CD8-positive, alpha-beta T cell (primary cell): ENCODE measurements at regions of chr3 and their contacts with region 1.

Region 1: DNA sequence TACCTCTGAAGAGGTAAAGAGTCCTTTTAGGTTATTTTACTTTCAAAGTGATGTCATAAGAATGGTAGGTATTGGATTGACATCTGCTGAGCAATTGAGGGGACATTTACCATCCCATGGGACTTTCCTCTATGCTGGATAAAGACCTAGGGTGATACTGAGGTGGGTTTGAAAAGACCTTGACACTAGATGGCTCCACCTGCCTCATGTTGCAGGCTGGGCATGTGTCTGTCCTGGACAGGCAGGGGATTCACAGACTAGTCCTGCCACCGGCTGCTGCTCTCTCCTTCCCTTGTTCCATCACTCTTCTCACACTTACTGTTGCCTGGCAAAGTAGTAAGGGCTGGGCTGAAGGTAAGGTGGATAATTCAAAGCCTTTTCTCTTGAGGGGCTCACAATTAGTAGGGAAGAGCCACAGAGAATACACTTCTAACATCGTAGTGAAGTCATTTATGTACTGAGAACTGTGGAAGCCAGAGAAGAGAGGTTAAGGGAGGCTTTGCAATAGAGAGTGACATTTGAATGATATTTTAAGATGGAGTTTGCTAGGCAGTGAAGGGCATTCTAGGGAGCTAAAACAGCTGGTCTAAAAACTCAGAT is 27.7 kb downstream of the TRAK1 start:
- DNase-seq: peak in 2 of 9 experiments; percentile 31 to 49
- ATAC-seq: no peak
- H3K4me3 ChIP-seq: no peak overlapping the region
- H3K4me3 Mint-ChIP-seq: no peak overlapping the region
- H3K27ac ChIP-seq: no peak overlapping the region
- H3K27ac Mint-ChIP-seq: no peak overlapping the region
- H3K4me1 ChIP-seq: no peaks in the 10 kb centered on the region
- H3K4me1 Mint-ChIP-seq: peaks cover 18% of the 10 kb centered on the region
- H3K27me3 ChIP-seq: no peaks in the 10 kb centered on the region
- H3K27me3 Mint-ChIP-seq: no peaks in the 10 kb centered on the region
- CTCF ChIP-seq: no peak

Region 2: GRCh38 chr3:41690766-41691563 is 427.9 kb before region 1 on chr3:
- CTCF ChIA-PET with region 1: no interaction called
- POLR2A ChIA-PET with region 1: no interaction called
- intact Hi-C with region 1: no loop called
- DNase-seq: peak in 1 of 9 experiments; percentile 1
- ATAC-seq: no peak
- H3K4me3 ChIP-seq: no peak overlapping the region
- H3K4me3 Mint-ChIP-seq: no peak overlapping the region
- H3K27ac ChIP-seq: no peak overlapping the region
- H3K27ac Mint-ChIP-seq: no peak overlapping the region
- H3K4me1 ChIP-seq: no peaks in the 10 kb centered on the region
- H3K4me1 Mint-ChIP-seq: peaks cover 12% of the 10 kb centered on the region
- H3K27me3 ChIP-seq: no peaks in the 10 kb centered on the region
- H3K27me3 Mint-ChIP-seq: no peaks in the 10 kb centered on the region
- CTCF ChIP-seq: no peak

Region 3: GRCh38 chr3:41900265-41900664 is 218.6 kb before region 1 on chr3:
- CTCF ChIA-PET with region 1: no interaction called
- POLR2A ChIA-PET with region 1: no interaction called
- intact Hi-C with region 1: no loop called
- DNase-seq: no peak
- ATAC-seq: no peak
- H3K4me3 ChIP-seq: no peak overlapping the region
- H3K4me3 Mint-ChIP-seq: no peak overlapping the region
- H3K27ac ChIP-seq: no peak overlapping the region
- H3K27ac Mint-ChIP-seq: no peak overlapping the region
- H3K4me1 ChIP-seq: no peaks in the 10 kb centered on the region
- H3K4me1 Mint-ChIP-seq: no peaks in the 10 kb centered on the region
- H3K27me3 ChIP-seq: no peaks in the 10 kb centered on the region
- H3K27me3 Mint-ChIP-seq: no peaks in the 10 kb centered on the region
- CTCF ChIP-seq: no peak

Region 4: GRCh38 chr3:42012935-42013690 is 105.7 kb before region 1 on chr3:
- CTCF ChIA-PET with region 1: no interaction called
- POLR2A ChIA-PET with region 1: no interaction called
- intact Hi-C with region 1: no loop called
- DNase-seq: peak; percentile 56 to 89 (median 71)
- ATAC-seq: peak; percentile 73
- H3K4me3 ChIP-seq: peak overlapping the region; percentile 85 to 89
- H3K4me3 Mint-ChIP-seq: peak overlapping the region; percentile 91
- H3K27ac ChIP-seq: peak overlapping the region; percentile 72 to 98
- H3K27ac Mint-ChIP-seq: peak overlapping the region; percentile 98
- H3K4me1 ChIP-seq: peaks cover 20% of the 10 kb centered on the region
- H3K4me1 Mint-ChIP-seq: peaks cover 35% of the 10 kb centered on the region
- H3K27me3 ChIP-seq: no peaks in the 10 kb centered on the region
- H3K27me3 Mint-ChIP-seq: no peaks in the 10 kb centered on the region
- CTCF ChIP-seq: no peak

Region 5: GRCh38 chr3:42229942-42230688 is 111.3 kb after region 1 on chr3:
- CTCF ChIA-PET with region 1: interaction called, 5 read pairs
- POLR2A ChIA-PET with region 1: no interaction called
- intact Hi-C with region 1: loop called (anchors 2 kb)
- DNase-seq: no peak
- ATAC-seq: no peak
- H3K4me3 ChIP-seq: no peak overlapping the region
- H3K4me3 Mint-ChIP-seq: no peak overlapping the region
- H3K27ac ChIP-seq: no peak overlapping the region
- H3K27ac Mint-ChIP-seq: no peak overlapping the region
- H3K4me1 ChIP-seq: no peaks in the 10 kb centered on the region
- H3K4me1 Mint-ChIP-seq: no peaks in the 10 kb centered on the region
- H3K27me3 ChIP-seq: peaks cover 0 to 2% of the 10 kb centered on the region in 2 experiments
- H3K27me3 Mint-ChIP-seq: peaks cover 17% of the 10 kb centered on the region
- CTCF ChIP-seq: no peak